Panc1 (cell line): ENCODE measurements at regions of chr6 and their contacts with region 1.

Region 1: DNA sequence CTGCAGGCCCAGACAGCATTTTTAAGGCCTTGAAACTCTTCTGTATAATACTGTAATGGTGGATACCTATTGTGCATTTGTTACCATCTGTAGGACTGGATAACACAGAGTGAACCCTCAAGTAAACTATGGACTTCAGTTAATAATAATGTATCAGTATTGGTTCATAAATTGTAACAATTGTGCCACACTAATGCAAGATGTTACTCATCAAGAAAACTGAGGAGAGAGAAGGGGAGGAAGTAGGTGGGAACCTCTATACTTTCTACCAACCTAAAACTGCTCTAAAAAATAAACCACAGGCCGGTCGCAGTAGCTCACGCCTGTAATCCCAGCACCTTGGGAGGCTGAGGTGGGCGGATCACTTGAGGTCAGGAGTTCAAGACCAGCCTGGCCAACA is 10.8 kb downstream of the MAPK13 start:
- DNase-seq: no peak
- ATAC-seq: no peak
- H3K4me3 ChIP-seq: no peak overlapping the region
- H3K27ac ChIP-seq: no peak overlapping the region
- H3K4me1 ChIP-seq: no peaks in the 10 kb centered on the region
- H3K27me3 ChIP-seq: no peaks in the 10 kb centered on the region
- CTCF ChIP-seq: no peak

Region 2: GRCh38 chr6:36340618-36341454 is 199.7 kb after region 1 on chr6:
- CTCF ChIA-PET with region 1: interaction called, 3 read pairs
- POLR2A ChIA-PET with region 1: interaction called, 15 read pairs
- in situ Hi-C with region 1: no loop called
- intact Hi-C with region 1: no loop called
- DNase-seq: peak; percentile 42
- ATAC-seq: peak; percentile 91
- H3K4me3 ChIP-seq: peak overlapping the region; percentile 41 to 70
- H3K27ac ChIP-seq: peak overlapping the region; percentile 34; the same call in 1 of the 2 replicates
- H3K4me1 ChIP-seq: peaks cover 9% of the 10 kb centered on the region; the same call in 1 of the 2 replicates
- H3K27me3 ChIP-seq: peaks cover 5% of the 10 kb centered on the region
- CTCF ChIP-seq: peak; percentile 99

Region 3: GRCh38 chr6:36414481-36414880 is 273.4 kb after region 1 on chr6:
- CTCF ChIA-PET with region 1: no interaction called
- POLR2A ChIA-PET with region 1: no interaction called
- in situ Hi-C with region 1: no loop called
- intact Hi-C with region 1: no loop called
- DNase-seq: no peak
- ATAC-seq: no peak
- H3K4me3 ChIP-seq: no peak overlapping the region
- H3K27ac ChIP-seq: no peak overlapping the region
- H3K4me1 ChIP-seq: no peaks in the 10 kb centered on the region
- H3K27me3 ChIP-seq: no peaks in the 10 kb centered on the region; the same call in 1 of the 2 replicates
- CTCF ChIP-seq: no peak